ENCODE measurements at regions of chr3 and their contacts with region 1.

Region 1: GRCh38 chr3:56702490-56703315 is 19.6 kb upstream of the TASOR start:
- DNase-seq: no peak
- H3K4me3 ChIP-seq: no peak overlapping the region
- H3K27ac ChIP-seq: no peak overlapping the region
- H3K4me1 ChIP-seq: peaks cover 0 to 7% (median 3%) of the 10 kb centered on the region in 4 donors
- H3K27me3 ChIP-seq: no peaks in the 10 kb centered on the region
- CTCF ChIP-seq: peak; percentile 69 to 81 (median 77)
- EP300 ChIP-seq: no peak
- POLR2A ChIP-seq: no peak

Region 2: GRCh38 chr3:56988458-56989168 is 285.9 kb after region 1 on chr3:
- intact Hi-C with region 1: loop called (anchors 1 kb)
- DNase-seq: peak; percentile 91
- H3K4me3 ChIP-seq: no peak overlapping the region
- H3K27ac ChIP-seq: peak overlapping the region in 3 of 4 donors; percentile 55 to 62 (median 55)
- H3K4me1 ChIP-seq: peaks cover 0 to 42% (median 25%) of the 10 kb centered on the region in 4 donors
- H3K27me3 ChIP-seq: no peaks in the 10 kb centered on the region
- CTCF ChIP-seq: peak; percentile 67 to 85 (median 76)
- EP300 ChIP-seq: no peak
- POLR2A ChIP-seq: no peak

Region 3: GRCh38 chr3:57094575-57094974 is 391.9 kb after region 1 on chr3:
- intact Hi-C with region 1: loop called (anchors 10 kb)
- DNase-seq: no peak
- H3K4me3 ChIP-seq: no peak overlapping the region
- H3K27ac ChIP-seq: peak overlapping the region in 2 of 4 donors; percentile 24 to 50
- H3K4me1 ChIP-seq: peaks cover 0 to 18% (median 14%) of the 10 kb centered on the region in 4 donors
- H3K27me3 ChIP-seq: no peaks in the 10 kb centered on the region
- CTCF ChIP-seq: no peak
- EP300 ChIP-seq: no peak
- POLR2A ChIP-seq: no peak

Measured in sigmoid colon (tissue), 7 donors.